ENCODE measurements at regions of chr12 and their contacts with region 1.

Region 1: GRCh38 chr12:107093417-107094182 is at the start of gene CRY1:
- DNase-seq: peak; percentile 99
- total RNA-seq, gene CRY1: 17.4 to 31.0 TPM

Region 2: DNA sequence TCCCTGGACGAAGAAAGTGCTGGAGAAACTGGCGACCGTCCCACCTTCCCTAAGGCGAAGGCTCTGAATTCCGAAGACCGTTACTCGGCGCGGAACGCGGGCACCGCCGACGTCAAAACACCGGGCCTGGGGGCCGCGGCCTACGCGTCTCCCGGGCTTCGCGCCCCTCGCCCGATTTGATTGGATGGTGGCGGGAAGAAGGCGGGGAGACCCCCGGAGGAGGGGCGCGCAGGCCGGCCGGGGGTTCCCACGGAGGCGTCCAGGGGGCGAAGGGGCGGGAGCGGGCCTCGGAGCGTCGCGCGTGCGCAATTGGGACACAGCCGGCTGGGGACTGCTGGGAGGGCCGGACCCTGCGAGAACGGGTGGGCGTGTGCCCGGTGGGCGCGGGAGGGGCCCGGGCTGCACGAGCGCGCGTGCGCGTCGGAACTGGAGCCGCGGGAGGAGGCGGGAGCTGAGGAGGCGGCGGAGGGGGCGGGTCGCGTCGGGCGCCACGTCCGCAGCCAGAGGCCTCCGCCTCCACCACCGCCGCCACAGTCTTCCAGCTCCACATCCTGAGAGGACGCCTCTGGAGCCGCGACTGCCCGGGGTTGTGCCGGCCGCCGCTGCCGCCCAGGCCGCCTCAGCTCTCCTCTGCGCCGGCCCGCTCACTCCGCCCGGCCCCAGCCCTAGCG is 138.1 kb before region 1 on chr12 and contains the start of gene TMEM263:
- intact Hi-C with region 1: loop called in 1 of 2 experiments (anchors 10 kb)
- DNase-seq: peak; percentile 98
- total RNA-seq, gene TMEM263: 57.0 to 57.4 TPM